ENCODE measurements at regions of chr10 and their contacts with region 1.

Region 1: DNA sequence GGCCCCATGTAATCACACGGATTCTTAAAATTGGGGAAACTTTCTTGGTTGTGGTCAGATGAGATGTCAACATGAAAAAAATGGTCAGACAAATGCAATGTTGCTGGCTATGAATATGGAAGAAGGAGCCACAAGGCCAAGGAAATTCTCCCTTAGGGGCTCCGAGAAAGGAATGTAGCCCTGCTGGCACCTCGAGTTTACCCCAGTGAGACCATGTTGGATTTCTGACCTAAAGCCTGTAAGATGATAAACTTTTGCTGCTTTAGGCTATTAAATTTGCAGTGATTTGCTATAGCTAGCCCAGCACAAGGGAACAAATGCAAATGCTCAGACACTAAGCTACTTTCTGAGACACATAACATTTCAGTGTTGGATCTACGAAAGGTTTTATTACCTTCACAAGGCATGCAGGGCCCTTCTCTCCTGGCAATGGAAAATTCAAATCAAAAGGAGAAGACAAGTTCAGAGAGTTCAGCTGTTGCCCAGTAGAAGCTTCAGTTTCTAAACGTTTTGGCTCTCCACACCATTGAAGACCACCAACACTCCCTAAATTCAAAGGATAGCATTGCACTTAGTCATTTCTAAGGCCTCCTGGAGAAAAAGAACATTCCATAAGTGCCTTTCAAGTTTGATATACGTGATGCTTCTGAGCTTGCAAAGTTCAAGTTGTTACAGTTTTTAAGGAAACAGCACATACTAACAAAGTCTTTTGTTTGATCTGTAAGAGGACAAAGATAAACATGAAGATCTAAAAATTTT is 23.4 kb downstream of the MCMBP start:
- DNase-seq: no peak
- H3K4me3 ChIP-seq: no peak overlapping the region
- H3K27ac ChIP-seq: no peak overlapping the region
- H3K4me1 ChIP-seq: no peaks in the 10 kb centered on the region
- CTCF ChIP-seq: no peak

Region 2: GRCh38 chr10:118908557-118909256 is 940.5 kb before region 1 on chr10:
- CTCF ChIA-PET with region 1: no interaction called
- POLR2A ChIA-PET with region 1: no interaction called
- intact Hi-C with region 1: no loop called
- DNase-seq: no peak
- H3K4me3 ChIP-seq: no peak overlapping the region
- H3K27ac ChIP-seq: no peak overlapping the region
- H3K4me1 ChIP-seq: no peaks in the 10 kb centered on the region
- CTCF ChIP-seq: no peak

Region 3: GRCh38 chr10:119834188-119834587 is 15.0 kb before region 1 on chr10:
- CTCF ChIA-PET with region 1: no interaction called
- POLR2A ChIA-PET with region 1: interaction called, 11 read pairs
- intact Hi-C with region 1: no loop called
- DNase-seq: no peak
- H3K4me3 ChIP-seq: no peak overlapping the region
- H3K27ac ChIP-seq: no peak overlapping the region
- H3K4me1 ChIP-seq: no peaks in the 10 kb centered on the region
- CTCF ChIP-seq: no peak

Region 4: GRCh38 chr10:120138689-120139088 is 289.5 kb after region 1 on chr10:
- CTCF ChIA-PET with region 1: no interaction called
- POLR2A ChIA-PET with region 1: no interaction called
- intact Hi-C with region 1: no loop called
- DNase-seq: no peak
- H3K4me3 ChIP-seq: no peak overlapping the region
- H3K27ac ChIP-seq: no peak overlapping the region
- H3K4me1 ChIP-seq: no peaks in the 10 kb centered on the region
- CTCF ChIP-seq: no peak